Natural killer cell (primary cell): ENCODE measurements at regions of chr15 and their contacts with region 1.

Region 1: DNA sequence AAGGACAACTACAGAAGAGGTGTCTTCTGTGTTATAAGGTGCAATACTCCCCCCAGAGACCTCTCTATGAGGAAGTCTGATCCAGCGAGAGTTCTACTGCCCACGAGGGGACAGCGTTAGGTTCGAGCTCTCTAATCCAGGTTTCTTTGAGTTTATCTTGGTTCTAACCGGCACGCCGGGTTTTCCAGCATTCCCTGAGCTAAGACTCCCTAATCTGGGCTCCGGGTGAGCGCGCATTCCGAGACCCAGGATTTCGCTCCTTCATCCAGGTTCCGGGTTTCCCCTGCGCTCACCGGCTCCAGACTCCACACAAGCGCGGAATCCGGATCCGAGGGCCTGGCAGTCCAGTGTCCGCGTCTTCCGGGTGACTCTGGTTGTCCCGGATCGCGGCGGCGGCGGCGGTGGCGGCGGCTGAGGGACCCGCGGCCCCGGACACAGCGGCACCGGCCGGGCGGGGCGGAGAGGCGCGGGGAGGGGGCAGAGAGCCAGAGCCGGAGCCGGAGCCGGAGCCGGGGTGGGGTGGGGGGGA is at the start of gene ZNF609:
- DNase-seq: peak; percentile 90 to 93
- ATAC-seq: peak; percentile 85 to 88 (median 87)
- H3K4me3 ChIP-seq: peak within 1 kb of the TSS; percentile 57
- H3K4me3 Mint-ChIP-seq: peak within 1 kb of the TSS; percentile 88
- H3K27ac ChIP-seq: peak within 1 kb of the TSS; percentile 62
- H3K27ac Mint-ChIP-seq: peak within 1 kb of the TSS; percentile 72 to 77
- H3K4me1 ChIP-seq: peaks cover 24% of the 10 kb centered on the region
- H3K4me1 Mint-ChIP-seq: peaks cover 43 to 48% of the 10 kb centered on the region in 2 donors
- H3K27me3 ChIP-seq: no peaks in the 10 kb centered on the region
- H3K27me3 Mint-ChIP-seq: no peaks in the 10 kb centered on the region
- CTCF ChIP-seq: no peak
- total RNA-seq, gene ZNF609: 40.3 to 59.7 (median 55.3) TPM

Region 2: DNA sequence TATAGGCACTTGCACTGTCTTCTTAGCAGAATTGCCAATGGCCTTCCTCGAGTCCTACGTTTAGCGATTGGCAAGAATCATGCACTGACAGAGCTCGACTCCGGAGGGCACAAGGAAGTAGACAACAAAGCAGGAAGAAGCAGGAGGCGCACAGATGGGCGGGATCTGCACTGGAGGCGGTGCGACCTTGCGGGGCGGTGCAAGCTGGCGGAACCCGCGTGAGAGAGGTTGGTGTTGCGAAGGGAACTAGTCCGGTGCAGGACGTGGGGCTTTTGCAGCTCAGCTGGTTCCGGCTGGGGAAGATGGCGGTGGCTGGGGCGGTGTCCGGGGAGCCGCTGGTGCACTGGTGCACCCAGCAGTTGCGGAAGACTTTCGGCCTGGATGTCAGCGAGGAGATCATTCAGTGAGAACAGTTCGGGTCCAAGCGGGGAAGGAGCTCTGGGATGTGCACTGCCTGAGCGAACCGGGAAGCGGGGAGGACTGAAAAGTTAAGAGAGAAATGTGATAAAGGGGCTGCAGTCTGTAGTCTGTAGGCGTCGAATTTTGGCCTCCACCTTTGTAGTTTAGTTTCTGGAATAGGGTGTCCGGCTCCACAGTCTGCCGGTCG is 72.6 kb before region 1 on chr15 and contains the start of gene TRIP4:
- intact Hi-C with region 1: loop called (anchors 10 kb)
- DNase-seq: peak; percentile 95 to 98
- ATAC-seq: peak; percentile 99 to 100 (median 99)
- H3K4me3 ChIP-seq: peak within 1 kb of the TSS; percentile 85
- H3K4me3 Mint-ChIP-seq: peak within 1 kb of the TSS; percentile 99
- H3K27ac ChIP-seq: peak within 1 kb of the TSS; percentile 79
- H3K27ac Mint-ChIP-seq: peak within 1 kb of the TSS; percentile 91 to 98
- H3K4me1 ChIP-seq: peaks cover 16% of the 10 kb centered on the region
- H3K4me1 Mint-ChIP-seq: peaks cover 18 to 30% of the 10 kb centered on the region in 2 donors
- H3K27me3 ChIP-seq: no peaks in the 10 kb centered on the region
- H3K27me3 Mint-ChIP-seq: no peaks in the 10 kb centered on the region
- CTCF ChIP-seq: no peak
- total RNA-seq, gene TRIP4: 32.9 to 37.1 (median 33.7) TPM

Region 3: DNA sequence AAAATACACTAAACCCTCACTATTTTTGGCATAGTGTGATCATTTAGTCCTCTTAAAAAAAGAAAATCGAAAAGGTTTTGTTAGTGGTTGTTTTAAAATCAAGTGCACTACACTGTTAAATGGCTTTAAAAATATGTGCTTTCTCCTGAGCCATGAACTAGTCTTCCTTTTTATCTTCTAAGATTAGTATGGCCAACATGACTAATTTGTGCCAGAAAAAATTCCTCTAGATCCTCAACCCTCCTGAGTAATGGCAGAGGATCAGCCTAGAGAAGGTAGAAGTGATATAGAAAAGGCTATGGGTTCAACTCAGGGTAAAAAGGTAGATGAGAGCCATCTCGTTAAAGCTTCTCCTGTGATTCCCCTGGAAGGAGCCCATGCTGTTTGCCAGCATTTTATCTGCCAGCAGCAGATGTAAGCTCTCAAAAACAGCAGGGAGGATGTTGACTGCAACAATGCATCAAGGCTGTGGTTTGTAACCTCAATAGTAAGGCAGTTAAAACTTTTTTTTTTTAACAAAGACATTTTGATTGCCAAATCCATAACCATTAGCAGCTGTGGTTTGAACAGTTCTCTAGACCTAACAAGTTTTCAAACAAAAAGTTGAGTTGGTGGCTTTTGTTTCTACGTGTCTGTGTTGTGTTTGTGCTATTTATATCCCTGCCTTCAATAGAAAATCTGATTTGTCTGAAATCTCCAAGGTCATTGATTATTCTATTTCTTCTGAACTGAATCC is 30.1 kb before region 1 on chr15:
- intact Hi-C with region 1: loop called (anchors 2 kb)
- DNase-seq: peak; percentile 19 to 84
- ATAC-seq: peak; percentile 82 to 94 (median 87)
- H3K4me3 ChIP-seq: no peak overlapping the region
- H3K4me3 Mint-ChIP-seq: peak overlapping the region; percentile 72
- H3K27ac ChIP-seq: peak overlapping the region; percentile 74
- H3K27ac Mint-ChIP-seq: peak overlapping the region; percentile 66 to 87
- H3K4me1 ChIP-seq: peaks cover 11% of the 10 kb centered on the region
- H3K4me1 Mint-ChIP-seq: peaks cover 17 to 21% of the 10 kb centered on the region in 2 donors
- H3K27me3 ChIP-seq: no peaks in the 10 kb centered on the region
- H3K27me3 Mint-ChIP-seq: no peaks in the 10 kb centered on the region
- CTCF ChIP-seq: no peak

Region 4: GRCh38 chr15:64443747-64444621 is 16.3 kb before region 1 on chr15:
- intact Hi-C with region 1: no loop called
- DNase-seq: peak in 1 of 2 donors; percentile 36
- ATAC-seq: no peak
- H3K4me3 ChIP-seq: no peak overlapping the region
- H3K4me3 Mint-ChIP-seq: no peak overlapping the region
- H3K27ac ChIP-seq: no peak overlapping the region
- H3K27ac Mint-ChIP-seq: no peak overlapping the region
- H3K4me1 ChIP-seq: peaks cover 4% of the 10 kb centered on the region
- H3K4me1 Mint-ChIP-seq: peaks cover 1 to 24% of the 10 kb centered on the region in 2 donors
- H3K27me3 ChIP-seq: no peaks in the 10 kb centered on the region
- H3K27me3 Mint-ChIP-seq: no peaks in the 10 kb centered on the region
- CTCF ChIP-seq: no peak

Region 5: GRCh38 chr15:64503197-64503596 is 42.9 kb after region 1 on chr15:
- intact Hi-C with region 1: no loop called
- DNase-seq: peak in 1 of 2 donors; percentile 39
- ATAC-seq: peak in 2 of 3 donors; percentile 49 to 60
- H3K4me3 ChIP-seq: no peak overlapping the region
- H3K4me3 Mint-ChIP-seq: peak overlapping the region; percentile 4
- H3K27ac ChIP-seq: peak overlapping the region; percentile 35
- H3K27ac Mint-ChIP-seq: peak overlapping the region; percentile 63 to 85
- H3K4me1 ChIP-seq: peaks cover 20% of the 10 kb centered on the region
- H3K4me1 Mint-ChIP-seq: peaks cover 67 to 69% of the 10 kb centered on the region in 2 donors
- H3K27me3 ChIP-seq: no peaks in the 10 kb centered on the region
- H3K27me3 Mint-ChIP-seq: no peaks in the 10 kb centered on the region
- CTCF ChIP-seq: no peak

Region 6: GRCh38 chr15:64622410-64623260 is 162.4 kb after region 1 on chr15:
- intact Hi-C with region 1: loop called (anchors 5 kb)
- DNase-seq: peak; percentile 62 to 82
- ATAC-seq: peak; percentile 80 to 92 (median 91)
- H3K4me3 ChIP-seq: no peak overlapping the region
- H3K4me3 Mint-ChIP-seq: peak overlapping the region; percentile 68
- H3K27ac ChIP-seq: peak overlapping the region; percentile 74
- H3K27ac Mint-ChIP-seq: peak overlapping the region; percentile 86 to 88
- H3K4me1 ChIP-seq: peaks cover 48% of the 10 kb centered on the region
- H3K4me1 Mint-ChIP-seq: peaks cover 80 to 89% of the 10 kb centered on the region in 2 donors
- H3K27me3 ChIP-seq: no peaks in the 10 kb centered on the region
- H3K27me3 Mint-ChIP-seq: no peaks in the 10 kb centered on the region
- CTCF ChIP-seq: no peak

Region 7: GRCh38 chr15:64651573-64652260 is 191.4 kb after region 1 on chr15:
- intact Hi-C with region 1: loop called (anchors 5 kb)
- DNase-seq: peak in 1 of 2 donors; percentile 79
- ATAC-seq: peak; percentile 85 to 95 (median 92)
- H3K4me3 ChIP-seq: no peak overlapping the region
- H3K4me3 Mint-ChIP-seq: peak overlapping the region; percentile 55
- H3K27ac ChIP-seq: peak overlapping the region; percentile 54
- H3K27ac Mint-ChIP-seq: peak overlapping the region; percentile 78 to 87
- H3K4me1 ChIP-seq: peaks cover 14% of the 10 kb centered on the region
- H3K4me1 Mint-ChIP-seq: peaks cover 21% of the 10 kb centered on the region in 2 donors
- H3K27me3 ChIP-seq: no peaks in the 10 kb centered on the region
- H3K27me3 Mint-ChIP-seq: no peaks in the 10 kb centered on the region
- CTCF ChIP-seq: no peak